ENCODE measurements at regions of chr7 and their contacts with region 1.

Region 1: DNA sequence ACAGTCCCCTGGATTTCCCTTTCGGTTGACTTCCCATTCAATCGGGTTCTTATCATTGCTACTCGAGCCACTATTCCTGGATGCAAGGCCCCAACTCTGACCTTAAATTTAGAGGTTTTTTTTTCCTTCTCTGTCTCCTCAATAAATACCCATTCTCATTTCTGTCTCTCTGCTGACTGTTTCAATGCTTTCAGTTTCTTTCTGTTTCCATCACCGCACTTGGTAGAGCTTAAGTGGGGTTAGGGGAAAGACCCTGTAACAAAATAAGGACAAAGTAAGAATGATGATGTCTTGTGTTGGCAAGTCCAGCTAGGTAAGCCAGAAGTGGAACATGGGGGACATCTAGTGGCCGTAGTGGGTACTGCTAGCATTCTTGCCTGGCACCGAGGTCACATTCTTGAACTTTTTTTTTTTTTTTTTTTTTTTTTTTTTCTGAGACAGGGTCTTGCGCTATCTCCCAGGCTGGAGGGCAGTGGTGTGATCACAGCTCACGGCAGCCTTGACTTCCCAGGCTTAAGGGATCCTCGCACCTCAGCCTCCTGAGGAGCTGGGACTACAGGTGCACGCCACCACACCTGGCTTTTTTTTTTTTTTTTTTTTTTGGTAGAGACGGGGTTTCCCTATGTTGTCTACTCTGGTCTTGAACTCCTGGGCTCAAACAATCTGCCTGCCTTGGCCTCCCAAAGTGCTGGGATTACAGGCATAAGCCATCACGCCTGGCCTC is 40.3 kb downstream of the ZC3HC1 start:
- DNase-seq: peak; percentile 97
- H3K4me3 ChIP-seq: no peak overlapping the region
- H3K27ac ChIP-seq: peak overlapping the region; percentile 86
- H3K4me1 ChIP-seq: peaks cover 24% of the 10 kb centered on the region
- H3K27me3 ChIP-seq: no peaks in the 10 kb centered on the region
- CTCF ChIP-seq: peak; percentile 81 to 87
- POLR2A ChIP-seq: no peak

Region 2: GRCh38 chr7:129433847-129434674 is 576.8 kb before region 1 on chr7 and contains the start of gene STRIP2:
- CTCF ChIA-PET with region 1: no interaction called
- POLR2A ChIA-PET with region 1: no interaction called
- dilution Hi-C with region 1: no loop called
- intact Hi-C with region 1: loop called (anchors 2 kb)
- DNase-seq: peak; percentile 92
- H3K4me3 ChIP-seq: peak within 1 kb of the TSS; percentile 66 to 93 (median 90)
- H3K27ac ChIP-seq: peak within 1 kb of the TSS; percentile 54
- H3K4me1 ChIP-seq: peaks cover 21% of the 10 kb centered on the region
- H3K27me3 ChIP-seq: peaks cover 2 to 5% of the 10 kb centered on the region in 2 experiments
- CTCF ChIP-seq: peak in 1 of 2 donors; percentile 5
- POLR2A ChIP-seq: peak; percentile 86
- total RNA-seq, gene STRIP2: 8.8 and 10.0 TPM in 2 replicates

Region 3: DNA sequence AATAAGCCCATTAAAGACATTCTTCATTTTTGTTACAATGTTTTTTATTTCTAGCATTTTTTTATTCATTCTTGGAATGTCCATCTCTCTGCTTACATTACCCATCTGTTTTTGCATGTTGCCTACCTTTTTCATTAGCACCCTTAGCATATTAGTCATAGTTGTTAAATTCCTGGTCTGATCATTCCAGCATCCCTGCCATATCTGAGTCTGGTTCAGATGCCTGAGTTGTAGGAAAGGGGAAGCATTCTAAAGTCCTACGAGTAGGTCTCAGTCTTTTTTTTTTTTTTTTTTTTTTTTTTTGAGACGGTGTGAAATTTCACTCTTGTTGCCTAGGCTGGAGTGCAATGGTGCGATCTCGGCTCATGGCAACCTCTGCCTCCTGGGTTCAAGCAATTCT is 419.0 kb before region 1 on chr7:
- CTCF ChIA-PET with region 1: no interaction called
- POLR2A ChIA-PET with region 1: no interaction called
- dilution Hi-C with region 1: no loop called
- intact Hi-C with region 1: no loop called
- DNase-seq: no peak
- H3K4me3 ChIP-seq: no peak overlapping the region
- H3K27ac ChIP-seq: no peak overlapping the region
- H3K4me1 ChIP-seq: no peaks in the 10 kb centered on the region
- H3K27me3 ChIP-seq: peaks cover 1 to 2% of the 10 kb centered on the region in 2 experiments
- CTCF ChIP-seq: no peak
- POLR2A ChIP-seq: no peak

Region 4: GRCh38 chr7:129644634-129645230 is 366.1 kb before region 1 on chr7:
- CTCF ChIA-PET with region 1: interaction called, 9 read pairs
- POLR2A ChIA-PET with region 1: no interaction called
- dilution Hi-C with region 1: no loop called
- intact Hi-C with region 1: loop called (anchors 5 kb)
- DNase-seq: peak; percentile 66
- H3K4me3 ChIP-seq: no peak overlapping the region
- H3K27ac ChIP-seq: no peak overlapping the region
- H3K4me1 ChIP-seq: peaks cover 16% of the 10 kb centered on the region
- H3K27me3 ChIP-seq: no peaks in the 10 kb centered on the region
- CTCF ChIP-seq: peak in 1 of 2 donors; percentile 15
- POLR2A ChIP-seq: no peak

Region 5: DNA sequence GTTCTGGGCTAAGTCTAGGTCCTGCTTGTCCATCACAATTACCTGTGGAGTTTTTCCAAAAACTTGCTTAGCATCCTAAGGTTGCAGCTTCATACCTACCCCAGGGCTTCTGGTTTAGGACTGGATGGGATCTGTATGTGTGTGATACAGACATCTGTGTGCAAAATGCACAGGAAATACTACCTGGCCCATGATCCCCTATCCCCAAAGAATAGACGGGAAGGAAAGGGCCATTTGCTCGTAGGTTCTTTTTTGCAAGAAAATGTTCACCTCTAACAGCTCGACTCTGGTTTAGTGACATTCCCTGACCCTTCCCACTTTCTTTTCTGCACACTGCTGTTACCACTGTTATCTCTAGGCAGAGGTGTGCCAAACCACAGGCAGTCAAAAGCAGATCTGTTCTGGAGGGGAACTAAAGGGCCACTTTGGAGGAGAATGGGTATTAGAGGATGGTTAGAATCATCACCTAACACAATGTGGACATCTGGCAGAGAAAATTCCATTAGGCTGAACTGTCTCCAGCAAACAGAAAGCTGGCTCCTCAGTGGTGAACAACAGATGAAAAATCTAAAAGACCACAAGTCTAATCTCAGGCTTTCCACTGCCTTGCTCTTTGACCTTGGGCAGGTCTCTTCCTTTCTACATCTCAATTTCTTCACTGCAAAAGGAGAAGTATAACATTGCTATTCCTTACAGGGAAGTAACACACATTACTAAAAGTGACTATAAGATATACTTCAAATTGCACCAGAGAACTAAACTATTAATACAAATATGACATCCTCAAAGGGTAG is 165.5 kb before region 1 on chr7:
- CTCF ChIA-PET with region 1: interaction called, 3 read pairs
- POLR2A ChIA-PET with region 1: no interaction called
- dilution Hi-C with region 1: no loop called
- intact Hi-C with region 1: loop called (anchors 1 kb)
- DNase-seq: no peak
- H3K4me3 ChIP-seq: no peak overlapping the region
- H3K27ac ChIP-seq: peak overlapping the region; percentile 66
- H3K4me1 ChIP-seq: peaks cover 47% of the 10 kb centered on the region
- H3K27me3 ChIP-seq: no peaks in the 10 kb centered on the region
- CTCF ChIP-seq: no peak
- POLR2A ChIP-seq: no peak

Region 6: DNA sequence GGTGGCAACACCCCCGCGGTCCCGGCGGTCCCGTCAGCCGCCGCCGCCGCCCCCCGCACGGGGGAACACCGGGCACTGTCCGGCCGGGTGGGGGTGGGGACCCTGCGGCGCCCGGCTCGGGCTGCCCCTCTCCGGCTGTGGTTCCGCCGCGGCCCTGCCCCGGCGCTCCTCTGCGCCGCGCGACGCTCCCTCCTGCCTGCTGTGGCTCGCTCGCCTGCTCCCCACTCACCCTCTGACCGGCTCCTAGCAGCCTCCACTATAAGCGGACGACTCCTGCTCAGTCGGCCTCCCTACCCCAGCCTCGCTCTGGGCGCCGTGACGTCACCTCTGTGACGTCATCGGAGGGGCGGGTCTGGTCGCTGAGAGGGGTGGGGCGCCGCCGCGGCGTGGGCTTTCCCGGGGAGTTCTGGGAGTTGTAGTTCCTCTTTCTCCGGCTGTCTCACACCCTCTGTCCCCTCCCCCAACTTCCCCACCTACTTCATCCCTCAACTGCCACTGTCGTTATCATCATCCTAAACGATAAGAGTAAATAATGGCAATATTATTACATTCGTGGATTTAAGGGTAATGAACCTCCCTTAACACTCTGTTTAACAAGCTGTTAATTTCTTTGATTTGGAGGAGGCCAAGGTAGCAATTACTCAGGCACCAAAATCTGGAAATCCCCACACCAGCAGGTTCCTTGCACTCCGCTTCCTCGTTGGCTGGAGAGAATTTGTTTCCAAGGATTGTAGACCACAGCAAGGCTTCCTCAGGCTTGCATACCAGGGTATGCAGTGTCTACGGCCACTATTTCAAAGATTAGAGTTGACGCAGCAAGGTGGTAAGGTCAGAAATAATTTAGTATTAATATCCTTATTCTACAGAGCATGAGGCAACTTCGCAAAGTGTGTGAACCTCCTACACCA is 57.9 kb before region 1 on chr7 and contains the start of gene UBE2H:
- CTCF ChIA-PET with region 1: interaction called, 59 read pairs
- POLR2A ChIA-PET with region 1: interaction called, 9 read pairs
- dilution Hi-C with region 1: no loop called
- intact Hi-C with region 1: loop called (anchors 1 kb)
- DNase-seq: peak; percentile 92
- H3K4me3 ChIP-seq: peak within 1 kb of the TSS; percentile 73 to 99 (median 91)
- H3K27ac ChIP-seq: peak within 1 kb of the TSS; percentile 97
- H3K4me1 ChIP-seq: peaks cover 23% of the 10 kb centered on the region
- H3K27me3 ChIP-seq: no peaks in the 10 kb centered on the region
- CTCF ChIP-seq: no peak
- POLR2A ChIP-seq: peak; percentile 90
- total RNA-seq, gene UBE2H: 82.2 and 90.1 TPM in 2 replicates